CD8-positive, alpha-beta T cell (primary cell): ENCODE measurements at regions of chr4 and their contacts with region 1.

Region 1: DNA sequence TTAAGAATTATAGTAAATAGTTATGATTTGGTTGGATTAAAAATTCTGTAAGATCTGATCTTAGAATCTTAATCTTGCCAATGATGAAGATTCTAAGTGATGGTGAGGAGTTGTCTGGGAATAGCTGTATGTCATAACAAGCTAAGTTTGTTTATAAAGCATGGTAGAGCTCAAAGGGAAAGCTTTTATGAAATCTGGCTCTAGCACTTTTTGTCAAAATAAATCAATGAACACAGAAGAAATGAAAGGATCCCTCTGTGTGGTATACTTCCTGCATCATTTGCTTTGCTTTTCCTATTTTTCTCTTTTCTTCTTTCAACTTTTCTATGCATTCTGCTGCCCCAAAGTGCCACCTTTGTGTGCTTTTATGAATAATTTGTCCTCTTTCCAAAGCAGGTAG is 193.5 kb upstream of the FAT1 start:
- DNase-seq: no peak
- ATAC-seq: no peak
- H3K4me3 ChIP-seq: no peak overlapping the region
- H3K4me3 Mint-ChIP-seq: no peak overlapping the region
- H3K27ac ChIP-seq: no peak overlapping the region
- H3K27ac Mint-ChIP-seq: no peak overlapping the region
- H3K4me1 ChIP-seq: no peaks in the 10 kb centered on the region
- H3K4me1 Mint-ChIP-seq: no peaks in the 10 kb centered on the region
- H3K27me3 ChIP-seq: no peaks in the 10 kb centered on the region
- H3K27me3 Mint-ChIP-seq: no peaks in the 10 kb centered on the region
- CTCF ChIP-seq: no peak

Region 2: DNA sequence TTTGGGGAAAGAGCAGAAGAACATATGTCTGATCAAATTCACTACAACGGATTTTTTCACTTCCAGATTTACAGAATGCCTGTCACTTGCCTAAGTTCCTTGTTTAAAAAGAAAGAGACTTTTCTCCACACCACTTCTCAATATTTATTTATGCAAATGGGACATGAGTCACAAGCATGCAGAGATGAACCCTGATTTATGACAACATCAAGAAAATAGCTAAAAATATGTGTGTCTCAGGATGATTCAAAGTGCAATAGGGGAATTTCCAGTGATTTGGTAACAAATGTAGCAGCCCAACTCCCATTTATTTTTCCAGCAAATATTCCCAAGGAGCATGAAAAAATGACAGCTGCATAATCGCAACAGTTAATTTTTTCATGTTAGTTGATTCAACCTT is 13.0 kb before region 1 on chr4:
- CTCF ChIA-PET with region 1: no interaction called
- POLR2A ChIA-PET with region 1: interaction called, 3 read pairs
- intact Hi-C with region 1: loop called in 1 of 2 experiments (anchors 1 kb)
- DNase-seq: no peak
- ATAC-seq: no peak
- H3K4me3 ChIP-seq: no peak overlapping the region
- H3K4me3 Mint-ChIP-seq: no peak overlapping the region
- H3K27ac ChIP-seq: no peak overlapping the region
- H3K27ac Mint-ChIP-seq: no peak overlapping the region
- H3K4me1 ChIP-seq: no peaks in the 10 kb centered on the region
- H3K4me1 Mint-ChIP-seq: no peaks in the 10 kb centered on the region
- H3K27me3 ChIP-seq: no peaks in the 10 kb centered on the region
- H3K27me3 Mint-ChIP-seq: no peaks in the 10 kb centered on the region
- CTCF ChIP-seq: no peak